ENCODE measurements at regions of chr6 and their contacts with region 1.

Region 1: DNA sequence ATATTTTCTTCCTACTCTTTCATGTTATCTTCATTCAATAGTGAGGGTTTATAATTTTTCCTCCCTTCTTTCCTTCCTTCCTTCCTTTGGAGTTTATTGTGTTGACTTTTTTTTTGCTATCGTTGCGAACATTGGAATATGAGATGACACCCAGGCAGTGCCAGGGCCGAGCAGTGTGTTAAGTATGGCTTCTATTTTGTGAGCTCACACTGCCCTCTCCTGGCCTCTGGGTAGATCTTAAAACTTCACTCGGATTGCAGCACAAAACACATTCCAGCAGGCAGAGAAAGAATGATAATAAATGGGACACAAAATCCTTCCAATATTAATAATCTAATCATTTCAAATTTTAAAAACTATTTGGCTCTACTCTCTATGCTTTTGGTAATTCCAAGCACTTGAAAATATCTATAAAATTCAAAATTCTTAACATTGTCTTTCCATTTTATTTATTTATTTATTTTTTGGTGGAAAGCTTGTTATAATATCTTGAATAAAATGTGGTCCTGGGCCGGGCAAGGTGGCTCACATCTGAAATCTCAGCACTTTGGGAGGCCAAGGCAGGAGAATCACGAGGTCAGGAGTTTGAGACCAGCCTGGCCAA is 147.4 kb upstream of the OLIG3 start:
- DNase-seq: peak; percentile 69
- ATAC-seq: peak; percentile 92
- H3K4me3 ChIP-seq: no peak overlapping the region
- H3K27ac ChIP-seq: no peak overlapping the region
- H3K4me1 ChIP-seq: no peaks in the 10 kb centered on the region
- H3K27me3 ChIP-seq: peaks cover 14% of the 10 kb centered on the region
- CTCF ChIP-seq: peak; percentile 79
- POLR2A ChIP-seq: no peak
- RAD21 ChIP-seq: peak; percentile 87

Region 2: GRCh38 chr6:136846046-136846445 is 795.5 kb before region 1 on chr6:
- CTCF ChIA-PET with region 1: no interaction called
- POLR2A ChIA-PET with region 1: no interaction called
- dilution Hi-C with region 1: no loop called
- in situ Hi-C with region 1: no loop called
- intact Hi-C with region 1: loop called (anchors 5 kb)
- DNase-seq: peak; percentile 80
- ATAC-seq: peak; percentile 83
- H3K4me3 ChIP-seq: no peak overlapping the region
- H3K27ac ChIP-seq: no peak overlapping the region
- H3K4me1 ChIP-seq: no peaks in the 10 kb centered on the region
- H3K27me3 ChIP-seq: no peaks in the 10 kb centered on the region
- CTCF ChIP-seq: peak; percentile 76
- POLR2A ChIP-seq: no peak
- RAD21 ChIP-seq: peak; percentile 72

Region 3: GRCh38 chr6:137076277-137077068 is 565.1 kb before region 1 on chr6:
- CTCF ChIA-PET with region 1: no interaction called
- POLR2A ChIA-PET with region 1: no interaction called
- dilution Hi-C with region 1: no loop called
- in situ Hi-C with region 1: no loop called
- intact Hi-C with region 1: loop called (anchors 1 kb)
- DNase-seq: peak; percentile 50
- ATAC-seq: peak; percentile 96
- H3K4me3 ChIP-seq: no peak overlapping the region
- H3K27ac ChIP-seq: no peak overlapping the region
- H3K4me1 ChIP-seq: no peaks in the 10 kb centered on the region
- H3K27me3 ChIP-seq: peaks cover 1% of the 10 kb centered on the region; the same call in 1 of the 2 replicates
- CTCF ChIP-seq: peak; percentile 62
- POLR2A ChIP-seq: no peak
- RAD21 ChIP-seq: peak; percentile 64

Region 4: GRCh38 chr6:137136065-137136464 is 505.5 kb before region 1 on chr6:
- CTCF ChIA-PET with region 1: no interaction called
- POLR2A ChIA-PET with region 1: no interaction called
- dilution Hi-C with region 1: no loop called
- in situ Hi-C with region 1: no loop called
- intact Hi-C with region 1: loop called (anchors 5 kb)
- DNase-seq: no peak
- ATAC-seq: no peak
- H3K4me3 ChIP-seq: no peak overlapping the region
- H3K27ac ChIP-seq: no peak overlapping the region
- H3K4me1 ChIP-seq: no peaks in the 10 kb centered on the region
- H3K27me3 ChIP-seq: no peaks in the 10 kb centered on the region
- CTCF ChIP-seq: peak; percentile 35
- POLR2A ChIP-seq: no peak
- RAD21 ChIP-seq: peak; percentile 44

Region 5: GRCh38 chr6:137277971-137278637 is 363.5 kb before region 1 on chr6:
- CTCF ChIA-PET with region 1: no interaction called
- POLR2A ChIA-PET with region 1: no interaction called
- dilution Hi-C with region 1: no loop called
- in situ Hi-C with region 1: loop called (anchors 5 kb)
- intact Hi-C with region 1: no loop called
- DNase-seq: peak; percentile 84
- ATAC-seq: peak; percentile 90
- H3K4me3 ChIP-seq: no peak overlapping the region
- H3K27ac ChIP-seq: no peak overlapping the region
- H3K4me1 ChIP-seq: no peaks in the 10 kb centered on the region
- H3K27me3 ChIP-seq: no peaks in the 10 kb centered on the region; the same call in 1 of the 2 replicates
- CTCF ChIP-seq: no peak
- POLR2A ChIP-seq: no peak
- RAD21 ChIP-seq: no peak

Region 6: GRCh38 chr6:137341681-137342195 is 299.8 kb before region 1 on chr6:
- CTCF ChIA-PET with region 1: no interaction called
- POLR2A ChIA-PET with region 1: no interaction called
- dilution Hi-C with region 1: no loop called
- in situ Hi-C with region 1: no loop called
- intact Hi-C with region 1: loop called (anchors 2 kb)
- DNase-seq: no peak
- ATAC-seq: peak; percentile 21; the same call in 1 of the 2 replicates
- H3K4me3 ChIP-seq: no peak overlapping the region
- H3K27ac ChIP-seq: no peak overlapping the region
- H3K4me1 ChIP-seq: no peaks in the 10 kb centered on the region
- H3K27me3 ChIP-seq: peaks cover 17% of the 10 kb centered on the region
- CTCF ChIP-seq: 0 out of 2 replicates have a peak, but pooled peaks have one; percentile 14
- POLR2A ChIP-seq: no peak
- RAD21 ChIP-seq: no peak

Region 7: GRCh38 chr6:137415127-137415833 is 226.3 kb before region 1 on chr6:
- CTCF ChIA-PET with region 1: no interaction called
- POLR2A ChIA-PET with region 1: no interaction called
- dilution Hi-C with region 1: no loop called
- in situ Hi-C with region 1: no loop called
- intact Hi-C with region 1: no loop called
- DNase-seq: peak; percentile 53
- ATAC-seq: peak; percentile 95
- H3K4me3 ChIP-seq: peak overlapping the region; percentile 49
- H3K27ac ChIP-seq: no peak overlapping the region
- H3K4me1 ChIP-seq: no peaks in the 10 kb centered on the region
- H3K27me3 ChIP-seq: peaks cover 17% of the 10 kb centered on the region
- CTCF ChIP-seq: peak; percentile 60
- POLR2A ChIP-seq: no peak
- RAD21 ChIP-seq: peak; percentile 45

Region 8: DNA sequence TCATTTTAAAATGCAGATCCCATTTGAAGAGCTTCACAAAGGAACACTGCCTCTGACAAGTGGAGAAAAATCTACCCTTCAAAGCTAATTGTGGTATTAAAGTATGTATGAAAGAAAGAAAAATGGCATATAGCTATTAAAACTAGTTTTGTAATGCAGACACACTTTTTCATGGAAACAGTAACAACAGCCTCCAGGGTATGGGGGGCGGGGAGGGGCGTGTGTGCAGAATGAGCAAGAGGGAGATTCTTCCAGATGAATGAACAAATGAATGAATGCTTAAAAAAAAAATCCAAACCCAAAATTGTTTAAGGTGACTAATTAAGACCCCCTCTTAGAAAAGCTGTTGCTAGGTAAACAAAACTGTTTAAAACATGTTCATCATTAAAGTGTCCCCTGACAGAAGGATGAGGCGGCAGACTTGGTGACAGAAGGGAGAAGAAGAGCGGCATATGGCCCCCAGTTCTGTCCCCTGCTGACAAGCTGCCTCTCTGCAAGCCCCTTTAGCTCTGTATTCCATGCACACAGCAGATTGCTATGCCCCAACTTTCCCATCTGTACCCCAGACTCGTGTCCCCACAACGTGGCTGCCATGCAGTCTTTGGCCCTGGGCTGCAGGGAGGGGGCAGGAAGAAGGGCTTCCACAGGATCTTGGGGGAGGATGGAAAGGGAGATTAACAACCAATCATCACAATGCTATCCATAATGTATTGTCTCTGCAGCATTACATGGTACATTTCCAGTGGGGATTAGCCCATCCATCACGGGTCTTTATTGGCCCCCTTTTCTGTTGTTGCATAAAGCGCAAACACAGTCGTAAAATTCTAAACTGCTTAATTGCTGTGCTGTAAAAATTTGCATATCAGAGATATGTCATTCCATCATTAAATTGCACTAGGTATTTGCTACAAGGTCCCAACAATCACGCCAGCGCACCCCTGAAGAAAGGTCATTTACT is 39.0 kb before region 1 on chr6:
- CTCF ChIA-PET with region 1: no interaction called
- POLR2A ChIA-PET with region 1: no interaction called
- dilution Hi-C with region 1: no loop called
- in situ Hi-C with region 1: no loop called
- intact Hi-C with region 1: no loop called
- DNase-seq: no peak
- ATAC-seq: no peak
- H3K4me3 ChIP-seq: no peak overlapping the region
- H3K27ac ChIP-seq: no peak overlapping the region
- H3K4me1 ChIP-seq: no peaks in the 10 kb centered on the region
- H3K27me3 ChIP-seq: peaks cover 7% of the 10 kb centered on the region
- CTCF ChIP-seq: no peak
- POLR2A ChIP-seq: no peak
- RAD21 ChIP-seq: no peak

Region 9: DNA sequence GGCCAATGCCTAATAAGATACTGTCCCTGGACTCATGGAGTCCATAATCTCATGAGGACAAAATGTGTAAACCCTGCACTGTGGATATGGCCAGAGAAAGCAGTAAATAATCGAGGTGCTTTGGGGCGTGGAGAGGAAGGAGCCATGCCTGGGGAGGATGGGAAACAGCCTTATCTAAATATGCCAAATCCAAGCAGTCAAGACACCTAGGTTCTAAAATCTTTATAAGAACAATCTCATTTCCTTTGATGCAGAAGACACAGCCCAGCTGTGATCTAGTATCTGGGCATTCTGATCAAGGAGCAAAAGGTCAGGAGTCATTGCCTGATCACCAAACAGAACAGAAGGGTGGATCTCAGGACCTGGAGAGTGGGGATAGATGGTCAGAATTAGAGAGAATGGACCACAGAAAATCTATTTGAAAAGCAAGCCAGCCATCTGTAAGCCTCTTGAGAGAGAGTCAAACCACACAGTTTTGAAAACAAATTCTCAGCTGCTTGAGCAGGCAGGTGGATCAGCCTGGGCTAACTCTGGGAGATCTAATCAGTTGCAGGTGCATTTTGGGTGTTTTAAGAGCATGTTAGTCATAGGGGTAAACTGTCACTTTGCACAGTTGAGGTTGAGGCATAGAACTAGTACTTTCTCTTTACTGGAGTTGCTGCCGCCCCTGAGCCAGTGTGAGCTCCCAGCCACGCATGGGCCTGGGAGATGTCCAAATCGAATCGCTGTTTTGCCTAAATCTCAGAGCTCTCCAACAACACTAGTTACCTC is 94.7 kb after region 1 on chr6:
- CTCF ChIA-PET with region 1: no interaction called
- POLR2A ChIA-PET with region 1: no interaction called
- dilution Hi-C with region 1: no loop called
- in situ Hi-C with region 1: no loop called
- intact Hi-C with region 1: no loop called
- DNase-seq: no peak
- ATAC-seq: no peak
- H3K4me3 ChIP-seq: no peak overlapping the region
- H3K27ac ChIP-seq: no peak overlapping the region
- H3K4me1 ChIP-seq: peaks cover 4% of the 10 kb centered on the region
- H3K27me3 ChIP-seq: no peaks in the 10 kb centered on the region; the same call in 1 of the 2 replicates
- CTCF ChIP-seq: no peak
- POLR2A ChIP-seq: no peak
- RAD21 ChIP-seq: no peak